PC-3 (cell line): ENCODE measurements at regions of chr3 and their contacts with region 1.

Region 1: GRCh38 chr3:126389112-126389793 is 5.5 kb upstream of the CFAP100 start:
- DNase-seq: peak; percentile 85
- ATAC-seq: peak; percentile 94
- H3K4me3 ChIP-seq: peak overlapping the region; percentile 58; the same call in 1 of the 2 replicates
- H3K27ac ChIP-seq: no peak overlapping the region
- H3K4me1 ChIP-seq: 0 out of 2 replicates have a peak, but pooled peaks cover 3% of the 10 kb centered on the region
- H3K27me3 ChIP-seq: no peaks in the 10 kb centered on the region
- CTCF ChIP-seq: peak; percentile 85

Region 2: GRCh38 chr3:126134219-126134975 is 254.9 kb before region 1 on chr3:
- CTCF ChIA-PET with region 1: no interaction called
- POLR2A ChIA-PET with region 1: no interaction called
- intact Hi-C with region 1: loop called (anchors 1 kb)
- DNase-seq: peak; percentile 54
- ATAC-seq: peak; percentile 48; the same call in 1 of the 2 replicates
- H3K4me3 ChIP-seq: no peak overlapping the region
- H3K27ac ChIP-seq: no peak overlapping the region
- H3K4me1 ChIP-seq: peaks cover 7% of the 10 kb centered on the region
- H3K27me3 ChIP-seq: peaks cover 12% of the 10 kb centered on the region; the same call in 1 of the 2 replicates
- CTCF ChIP-seq: peak; percentile 74

Region 3: GRCh38 chr3:126208618-126209256 is 180.5 kb before region 1 on chr3:
- CTCF ChIA-PET with region 1: no interaction called
- POLR2A ChIA-PET with region 1: no interaction called
- intact Hi-C with region 1: no loop called
- DNase-seq: peak; percentile 84
- ATAC-seq: peak; percentile 61
- H3K4me3 ChIP-seq: no peak overlapping the region
- H3K27ac ChIP-seq: no peak overlapping the region
- H3K4me1 ChIP-seq: peaks cover 12% of the 10 kb centered on the region; the same call in 1 of the 2 replicates
- H3K27me3 ChIP-seq: no peaks in the 10 kb centered on the region
- CTCF ChIP-seq: no peak

Region 4: GRCh38 chr3:126259411-126260391 is 129.6 kb before region 1 on chr3:
- CTCF ChIA-PET with region 1: interaction called, 3 read pairs
- POLR2A ChIA-PET with region 1: no interaction called
- intact Hi-C with region 1: loop called (anchors 1 kb)
- DNase-seq: peak; percentile 21
- ATAC-seq: 0 out of 2 replicates have a peak, but pooled peaks have one; percentile 42
- H3K4me3 ChIP-seq: no peak overlapping the region
- H3K27ac ChIP-seq: no peak overlapping the region
- H3K4me1 ChIP-seq: no peaks in the 10 kb centered on the region
- H3K27me3 ChIP-seq: no peaks in the 10 kb centered on the region
- CTCF ChIP-seq: peak; percentile 63